Activated CD8-positive, alpha-beta memory T cell treated with anti-CD3 and anti-CD28 coated beads, Interleukin-2, amount 10 ng/mL, durations not matched to agents 7 days and 5 days (primary cell): ENCODE measurements at regions of chr11 and their contacts with region 1.

Region 1: GRCh38 chr11:8099291-8099899 is 18.4 kb downstream of the TUB start:
- DNase-seq: peak; percentile 80
- ATAC-seq: peak; percentile 78
- H3K4me3 Mint-ChIP-seq: no peak overlapping the region
- H3K27ac Mint-ChIP-seq: no peak overlapping the region
- H3K4me1 Mint-ChIP-seq: no peaks in the 10 kb centered on the region
- H3K27me3 Mint-ChIP-seq: no peaks in the 10 kb centered on the region

Region 2: GRCh38 chr11:8110396-8110795 is 11.0 kb after region 1 on chr11:
- CTCF ChIA-PET with region 1: interaction called, 16 read pairs
- DNase-seq: no peak
- ATAC-seq: no peak
- H3K4me3 Mint-ChIP-seq: no peak overlapping the region
- H3K27ac Mint-ChIP-seq: no peak overlapping the region
- H3K4me1 Mint-ChIP-seq: no peaks in the 10 kb centered on the region
- H3K27me3 Mint-ChIP-seq: no peaks in the 10 kb centered on the region

Region 3: GRCh38 chr11:8126649-8127289 is 27.4 kb after region 1 on chr11:
- CTCF ChIA-PET with region 1: no interaction called
- DNase-seq: no peak
- ATAC-seq: no peak
- H3K4me3 Mint-ChIP-seq: no peak overlapping the region
- H3K27ac Mint-ChIP-seq: no peak overlapping the region
- H3K4me1 Mint-ChIP-seq: no peaks in the 10 kb centered on the region
- H3K27me3 Mint-ChIP-seq: peaks cover 3% of the 10 kb centered on the region